ENCODE measurements at regions of chr11 and their contacts with region 1.

Region 1: DNA sequence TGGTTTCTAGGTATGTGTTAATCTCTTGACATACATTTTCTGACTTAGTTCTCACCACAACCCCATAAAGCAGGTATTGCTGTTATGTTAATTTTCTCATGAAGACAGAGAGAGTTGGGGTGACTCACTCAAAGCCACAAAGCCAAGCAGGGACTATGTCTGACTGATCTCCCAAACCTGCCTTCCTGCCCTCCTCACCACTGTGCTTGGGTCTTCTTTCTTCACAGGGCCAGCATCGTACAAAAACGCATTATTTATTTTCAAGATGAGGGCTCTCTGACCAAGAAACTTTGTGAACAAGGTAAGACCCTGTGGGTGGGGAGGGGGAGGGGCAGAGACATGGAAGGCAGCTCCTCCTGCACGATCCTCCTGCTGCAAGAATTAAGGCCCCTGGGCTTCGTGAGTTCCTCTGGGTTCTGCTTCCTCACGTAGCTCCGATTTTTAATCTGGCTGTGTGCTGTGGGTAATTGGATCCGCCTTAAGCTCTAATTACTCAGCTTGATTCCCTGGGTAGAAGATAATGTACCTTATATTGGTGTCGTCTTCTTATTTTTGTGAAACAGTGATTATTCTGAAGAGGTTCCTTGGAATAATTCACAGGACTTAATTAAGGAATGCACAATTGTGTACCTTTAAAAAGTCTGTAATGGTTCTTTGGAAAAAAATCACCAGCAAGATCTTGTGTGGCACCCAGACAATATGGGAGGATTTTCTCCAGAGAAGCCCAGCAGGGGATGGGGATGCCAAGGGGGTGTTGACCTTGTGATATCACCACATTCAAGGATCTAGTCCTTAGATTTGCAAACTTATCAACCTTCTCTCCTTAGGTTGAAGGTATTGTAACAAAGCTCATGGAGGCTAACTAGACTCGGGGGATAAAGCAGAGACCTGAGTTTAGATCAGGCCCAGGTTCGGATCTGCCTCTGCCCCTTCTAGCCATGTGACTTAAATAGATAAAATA is 112.9 kb downstream of the SPON1 start:
- DNase-seq: peak; percentile 46
- H3K4me3 Mint-ChIP-seq: no peak overlapping the region
- H3K27ac Mint-ChIP-seq: no peak overlapping the region
- H3K4me1 Mint-ChIP-seq: peaks cover 28% of the 10 kb centered on the region
- H3K27me3 Mint-ChIP-seq: peaks cover 21% of the 10 kb centered on the region

Region 2: DNA sequence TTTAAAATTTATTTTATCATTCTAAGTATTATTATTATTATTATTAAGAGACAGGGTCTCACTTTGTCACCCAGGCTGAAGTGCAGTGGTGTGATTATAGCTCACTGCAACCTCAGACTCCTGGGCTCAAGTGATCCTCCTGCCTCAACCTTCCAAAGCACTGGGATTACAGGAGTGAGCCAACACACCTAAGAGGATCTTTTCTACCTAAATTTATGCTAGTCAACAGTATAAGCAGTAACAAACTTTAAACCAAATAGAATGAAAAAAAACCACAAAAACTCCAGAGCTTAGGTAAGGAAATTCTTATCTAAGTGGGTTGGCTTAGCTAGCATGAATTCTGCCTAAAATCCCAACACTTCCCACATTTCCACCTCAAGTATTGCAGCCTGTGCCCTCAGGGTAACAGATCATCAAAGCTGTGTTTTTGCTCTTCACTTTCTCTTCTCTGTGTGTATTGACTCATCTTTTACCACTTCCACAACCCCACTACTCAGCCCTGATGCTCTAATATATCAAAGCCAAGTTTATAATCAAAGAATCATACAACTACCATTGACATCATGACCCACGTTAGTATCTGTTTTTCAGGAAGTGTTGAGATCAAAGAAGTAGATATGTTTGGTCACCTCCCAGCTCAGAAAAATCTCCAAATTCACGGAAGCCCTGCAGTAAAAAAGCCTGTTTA is 206.5 kb before region 1 on chr11:
- intact Hi-C with region 1: loop called (anchors 1 kb)
- DNase-seq: peak; percentile 25
- H3K4me3 Mint-ChIP-seq: peak overlapping the region; percentile 31
- H3K27ac Mint-ChIP-seq: peak overlapping the region; percentile 71
- H3K4me1 Mint-ChIP-seq: peaks cover 35% of the 10 kb centered on the region
- H3K27me3 Mint-ChIP-seq: peaks cover 12% of the 10 kb centered on the region

Region 3: DNA sequence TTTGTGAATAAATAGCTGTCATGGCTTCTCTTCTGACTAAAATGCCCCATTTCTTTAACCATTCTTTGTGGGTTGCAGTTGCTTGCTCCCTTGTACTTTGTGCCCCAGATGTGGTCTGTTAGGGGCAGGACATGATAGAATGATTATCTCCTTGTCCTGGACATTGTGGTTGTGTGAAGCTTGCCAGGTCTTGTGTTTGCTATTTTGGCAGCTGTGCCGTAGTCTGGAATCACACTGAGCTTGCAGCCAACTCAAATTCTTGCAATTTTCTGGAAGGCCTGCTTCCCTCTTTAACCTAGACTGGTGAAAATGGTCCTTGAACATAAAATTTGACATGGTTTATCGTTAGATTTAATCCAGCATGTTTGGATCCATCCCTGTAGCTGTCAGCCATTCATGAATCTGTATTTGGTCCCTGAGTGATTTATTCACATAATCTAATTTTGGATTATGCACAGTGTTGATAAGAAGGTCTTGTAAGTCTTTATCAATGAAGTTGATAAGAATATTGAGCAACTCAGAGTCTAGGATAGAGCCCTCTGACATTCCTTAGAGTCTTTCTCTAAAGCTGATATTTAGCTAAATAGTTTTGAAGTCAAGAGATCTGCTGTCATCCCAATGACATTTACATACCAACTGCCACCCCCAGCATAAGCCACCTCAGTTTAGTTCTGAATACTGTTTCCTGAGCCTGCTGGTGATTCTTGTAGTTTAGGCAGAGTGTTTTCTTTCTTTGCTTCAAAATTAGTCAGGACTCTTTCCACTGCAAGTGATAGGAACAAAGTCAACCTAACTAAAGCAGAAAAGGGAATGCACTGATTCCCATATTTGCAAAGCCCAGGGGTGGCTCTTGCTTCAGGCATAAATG is 103.1 kb before region 1 on chr11:
- intact Hi-C with region 1: loop called (anchors 2 kb)
- DNase-seq: no peak
- H3K4me3 Mint-ChIP-seq: no peak overlapping the region
- H3K27ac Mint-ChIP-seq: peak overlapping the region; percentile 86
- H3K4me1 Mint-ChIP-seq: peaks cover 36% of the 10 kb centered on the region
- H3K27me3 Mint-ChIP-seq: peaks cover 14% of the 10 kb centered on the region

Region 4: GRCh38 chr11:14148653-14149273 is 73.4 kb after region 1 on chr11:
- intact Hi-C with region 1: loop called (anchors 2 kb)
- DNase-seq: no peak
- H3K4me3 Mint-ChIP-seq: no peak overlapping the region
- H3K27ac Mint-ChIP-seq: no peak overlapping the region
- H3K4me1 Mint-ChIP-seq: peaks cover 4% of the 10 kb centered on the region
- H3K27me3 Mint-ChIP-seq: peaks cover 10% of the 10 kb centered on the region

Region 5: GRCh38 chr11:14413307-14414069 is 338.1 kb after region 1 on chr11:
- intact Hi-C with region 1: loop called (anchors 5 kb)
- DNase-seq: no peak
- H3K4me3 Mint-ChIP-seq: no peak overlapping the region
- H3K27ac Mint-ChIP-seq: no peak overlapping the region
- H3K4me1 Mint-ChIP-seq: peaks cover 79% of the 10 kb centered on the region
- H3K27me3 Mint-ChIP-seq: no peaks in the 10 kb centered on the region

Measured in activated T-helper 1 cell treated with anti-CD3 and anti-CD28 coated beads, Interleukin-12 subunit alpha, Interleukin-12 subunit beta, Interleukin-2, Interleukin-4 antibody, amounts not matched to agents 30 ng/mL and 10 ng/mL and 1 ng/mL, durations not matched to agents 14 hours and 24 hours and 36 hours (primary cell).